MCF 10A (cell line): ENCODE measurements at regions of chrX and their contacts with region 1.

Region 1: DNA sequence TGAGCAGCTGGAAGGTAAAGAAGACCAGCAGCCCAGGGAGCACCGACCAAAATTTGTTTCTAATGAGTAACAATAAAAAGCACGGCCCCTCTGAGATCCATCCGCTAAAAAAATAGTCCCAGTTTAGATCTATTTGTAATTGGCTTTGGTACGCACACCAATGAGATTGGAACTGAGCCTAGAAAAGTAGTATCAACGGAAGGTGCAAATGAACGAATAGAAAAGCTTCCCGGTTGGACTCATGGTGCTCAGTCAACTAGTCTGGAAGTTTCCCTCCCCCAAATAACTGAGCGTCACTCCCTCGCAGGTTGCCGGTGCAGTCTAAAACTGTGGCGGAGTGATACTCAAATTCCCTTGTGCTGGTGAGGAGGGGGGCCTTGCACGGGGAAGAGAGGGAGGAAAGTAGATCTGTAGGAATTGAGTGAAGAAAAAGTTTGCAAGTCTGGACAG is at the start of gene COL4A5:
- DNase-seq: peak; percentile 90
- H3K4me3 Mint-ChIP-seq: peak within 1 kb of the TSS; percentile 88
- H3K27ac Mint-ChIP-seq: peak within 1 kb of the TSS; percentile 91
- H3K4me1 Mint-ChIP-seq: no peaks in the 10 kb centered on the region
- H3K27me3 Mint-ChIP-seq: peaks cover 40% of the 10 kb centered on the region
- CTCF ChIP-seq: no peak
- total RNA-seq, gene COL4A5: 122 and 138 TPM in 2 replicates

Region 2: DNA sequence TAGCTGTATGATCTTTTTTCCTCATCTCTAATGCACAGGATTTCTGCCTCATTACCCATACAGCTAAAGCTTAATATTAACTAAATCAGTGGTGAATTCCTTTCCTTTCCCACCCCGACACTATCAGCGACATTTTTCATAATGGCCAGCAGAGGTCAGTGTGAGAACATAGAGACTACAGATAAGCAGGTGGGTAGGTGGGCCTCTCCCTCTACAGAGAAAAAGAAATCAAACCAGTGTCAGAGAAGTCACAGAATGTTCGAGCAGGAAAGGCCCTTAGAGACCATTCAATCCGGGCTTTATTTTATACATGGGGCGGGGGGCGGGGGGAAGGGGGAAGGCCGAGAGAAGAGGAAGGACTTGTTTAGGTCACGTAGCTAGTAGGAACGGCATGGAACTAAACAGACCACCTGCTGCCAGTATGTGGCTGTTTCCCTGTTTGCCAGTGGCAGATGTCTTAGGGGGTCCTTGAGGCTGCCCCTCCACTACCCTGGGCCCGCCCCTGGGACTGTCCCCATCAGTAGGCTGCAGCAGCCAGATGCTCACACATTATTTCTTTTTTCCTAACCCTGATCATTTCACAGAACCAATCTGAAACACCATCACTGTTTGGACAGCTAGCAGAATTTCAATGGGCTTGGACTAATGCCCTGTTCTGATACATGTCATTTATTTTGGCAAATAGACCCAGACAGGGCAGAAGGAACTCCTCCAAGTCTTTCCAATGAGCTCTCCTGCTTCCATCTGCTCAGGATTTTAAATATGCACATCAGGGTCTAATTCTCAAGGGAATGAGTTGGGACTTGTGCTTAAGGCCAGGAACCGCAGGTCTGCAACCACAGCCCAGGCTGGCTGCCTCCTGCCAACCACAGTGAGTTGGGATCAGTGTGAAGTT is 214.5 kb before region 1 on chrX:
- CTCF ChIA-PET with region 1: interaction called, 4 read pairs
- POLR2A ChIA-PET with region 1: interaction called, 7 read pairs
- intact Hi-C with region 1: loop called (anchors 2 kb)
- DNase-seq: peak; percentile 53
- H3K4me3 Mint-ChIP-seq: no peak overlapping the region
- H3K27ac Mint-ChIP-seq: peak overlapping the region; percentile 65
- H3K4me1 Mint-ChIP-seq: peaks cover 6% of the 10 kb centered on the region
- H3K27me3 Mint-ChIP-seq: peaks cover 87% of the 10 kb centered on the region
- CTCF ChIP-seq: peak; percentile 74

Region 3: DNA sequence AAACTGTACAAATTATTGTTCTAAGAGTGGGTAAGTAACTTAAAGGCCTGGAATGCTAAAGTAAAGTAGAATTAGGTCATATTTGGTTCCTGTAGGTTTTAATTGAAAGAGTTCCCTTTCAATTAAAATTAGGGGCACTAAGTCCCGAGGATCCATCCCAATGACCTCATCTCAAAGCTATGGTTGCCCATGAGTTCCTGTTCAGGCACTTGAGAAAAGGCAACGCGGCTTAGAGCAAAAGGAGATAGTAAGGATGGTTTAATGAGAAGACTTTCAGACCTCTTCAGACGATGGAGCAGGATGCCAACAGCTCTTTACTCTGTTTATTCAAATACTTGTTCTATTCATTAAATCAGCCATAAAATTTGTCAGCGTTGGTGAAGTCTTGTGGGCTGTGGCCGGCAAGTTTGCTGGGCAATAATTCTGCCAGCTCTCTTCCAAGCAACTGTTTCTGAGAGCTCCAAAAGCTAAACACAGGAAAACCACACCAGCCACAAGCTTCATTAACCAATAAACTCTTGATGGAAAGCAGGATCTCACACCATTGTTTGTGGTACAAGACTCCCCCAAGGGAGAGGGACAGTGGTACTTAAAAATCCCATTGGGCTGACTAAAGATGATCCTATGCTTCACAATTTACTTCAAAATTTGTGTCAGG is 168.6 kb before region 1 on chrX:
- CTCF ChIA-PET with region 1: no interaction called
- POLR2A ChIA-PET with region 1: interaction called, 42 read pairs
- intact Hi-C with region 1: no loop called
- DNase-seq: no peak
- H3K4me3 Mint-ChIP-seq: peak overlapping the region; percentile 42
- H3K27ac Mint-ChIP-seq: peak overlapping the region; percentile 93
- H3K4me1 Mint-ChIP-seq: peaks cover 50% of the 10 kb centered on the region
- H3K27me3 Mint-ChIP-seq: peaks cover 74% of the 10 kb centered on the region
- CTCF ChIP-seq: no peak

Region 4: DNA sequence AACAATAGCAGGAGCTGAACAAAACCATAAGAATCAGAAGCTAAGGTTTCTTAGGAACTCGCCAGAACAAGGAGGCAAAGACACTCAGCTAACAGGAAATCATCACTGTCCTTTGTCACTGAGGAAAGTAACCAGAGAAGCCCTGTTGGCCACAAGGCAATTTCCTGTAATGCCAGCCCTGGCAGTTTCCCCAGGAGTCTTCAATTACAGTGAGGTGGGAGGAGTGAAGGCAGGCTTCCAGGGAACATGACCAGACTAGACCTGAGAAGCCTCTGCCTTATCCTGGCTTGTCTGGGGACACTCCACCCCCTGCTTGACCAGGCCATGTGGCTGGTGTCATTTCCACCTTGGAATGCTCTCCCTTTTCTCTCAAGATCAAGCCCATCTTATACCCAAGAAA is 126.5 kb before region 1 on chrX:
- CTCF ChIA-PET with region 1: no interaction called
- POLR2A ChIA-PET with region 1: interaction called, 20 read pairs
- intact Hi-C with region 1: loop called (anchors 1 kb)
- DNase-seq: peak; percentile 86
- H3K4me3 Mint-ChIP-seq: no peak overlapping the region
- H3K27ac Mint-ChIP-seq: peak overlapping the region; percentile 83
- H3K4me1 Mint-ChIP-seq: peaks cover 42% of the 10 kb centered on the region
- H3K27me3 Mint-ChIP-seq: peaks cover 88% of the 10 kb centered on the region
- CTCF ChIP-seq: no peak

Region 5: DNA sequence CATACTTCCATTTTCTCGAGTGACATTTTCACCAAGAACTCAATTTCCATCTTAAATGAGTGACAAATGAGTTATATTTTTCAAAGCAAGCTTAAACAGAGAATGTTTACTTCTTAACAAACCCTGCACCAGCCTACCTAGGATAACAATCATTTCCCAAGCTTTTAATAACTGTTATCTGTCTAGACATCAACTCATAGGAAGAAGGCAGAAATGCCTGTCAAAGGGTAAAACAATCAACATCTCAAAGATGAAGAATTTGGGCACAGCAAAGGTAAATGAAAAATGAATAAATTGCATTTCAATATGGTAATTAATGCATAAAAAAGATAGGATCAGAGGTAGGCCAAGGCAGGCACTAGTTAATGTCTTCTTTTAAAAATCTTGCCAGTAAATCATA is 28.7 kb before region 1 on chrX:
- CTCF ChIA-PET with region 1: no interaction called
- POLR2A ChIA-PET with region 1: interaction called, 14 read pairs
- intact Hi-C with region 1: no loop called
- DNase-seq: no peak
- H3K4me3 Mint-ChIP-seq: no peak overlapping the region
- H3K27ac Mint-ChIP-seq: no peak overlapping the region
- H3K4me1 Mint-ChIP-seq: peaks cover 6% of the 10 kb centered on the region
- H3K27me3 Mint-ChIP-seq: peaks cover 44% of the 10 kb centered on the region
- CTCF ChIP-seq: no peak

Region 6: DNA sequence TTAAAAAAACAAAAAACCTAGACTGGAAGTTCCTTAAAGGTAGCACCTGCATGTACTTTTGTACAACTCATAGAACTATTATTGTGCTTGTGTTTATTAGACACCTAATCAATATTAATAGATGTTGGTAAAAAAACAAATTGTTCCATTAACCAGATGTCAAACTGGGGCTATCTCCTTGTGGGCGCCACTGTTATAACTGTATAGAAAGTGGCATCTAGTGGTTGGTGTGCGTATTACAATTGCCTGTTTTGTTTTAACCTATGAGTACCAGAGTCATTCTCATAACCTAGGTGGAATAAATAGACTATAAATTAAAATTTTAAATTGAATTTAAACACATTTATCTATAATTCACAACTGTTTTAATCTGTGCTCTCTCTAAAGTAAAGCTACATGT is 97.5 kb after region 1 on chrX:
- CTCF ChIA-PET with region 1: no interaction called
- POLR2A ChIA-PET with region 1: interaction called, 3 read pairs
- intact Hi-C with region 1: loop called (anchors 2 kb)
- DNase-seq: peak; percentile 56
- H3K4me3 Mint-ChIP-seq: no peak overlapping the region
- H3K27ac Mint-ChIP-seq: no peak overlapping the region
- H3K4me1 Mint-ChIP-seq: no peaks in the 10 kb centered on the region
- H3K27me3 Mint-ChIP-seq: peaks cover 59% of the 10 kb centered on the region
- CTCF ChIP-seq: peak; percentile 71